ENCODE measurements at regions of chr19 and their contacts with region 1.

Region 1: GRCh38 chr19:56594783-56595547 is at the start of gene ZNF71:
- DNase-seq: peak; percentile 93 to 96 (median 93)
- ATAC-seq: peak; percentile 88 to 99 (median 98)
- H3K4me3 ChIP-seq: peak within 1 kb of the TSS; percentile 65 to 100 (median 88)
- H3K27ac ChIP-seq: peak within 1 kb of the TSS in 11 of 12 donors; percentile 61 to 86 (median 76)
- H3K4me1 ChIP-seq: peaks cover 0 to 24% (median 8%) of the 10 kb centered on the region in 12 donors
- H3K27me3 ChIP-seq: no peaks in the 10 kb centered on the region
- CTCF ChIP-seq: no peak
- POLR2A ChIP-seq: peak in 1 of 2 donors; percentile 64
- total RNA-seq, gene ZNF71: 5.3 to 15.3 (median 7.1) TPM

Region 2: GRCh38 chr19:56567274-56568120 is 27.5 kb before region 1 on chr19 and contains the start of gene ZNF470:
- intact Hi-C with region 1: loop called in 1 of 10 experiments (anchors 2 kb)
- DNase-seq: peak; percentile 95 to 98 (median 96)
- ATAC-seq: peak; percentile 98 to 100 (median 99)
- H3K4me3 ChIP-seq: peak within 1 kb of the TSS; percentile 75 to 98 (median 87)
- H3K27ac ChIP-seq: peak within 1 kb of the TSS; percentile 74 to 97 (median 90)
- H3K4me1 ChIP-seq: peaks cover 0 to 15% (median 6%) of the 10 kb centered on the region in 12 donors
- H3K27me3 ChIP-seq: no peaks in the 10 kb centered on the region
- CTCF ChIP-seq: peak in 1 of 12 donors; percentile 15
- POLR2A ChIP-seq: peak in 1 of 2 donors; percentile 63
- total RNA-seq, gene ZNF470: 1.7 to 7.1 (median 3.2) TPM

Region 3: GRCh38 chr19:56671613-56671994 is 76.6 kb after region 1 on chr19 and contains the start of gene ZNF835:
- intact Hi-C with region 1: loop called in 2 of 10 experiments (anchors 5 kb)
- DNase-seq: peak; percentile 96 to 99 (median 97)
- ATAC-seq: peak; percentile 95 to 99 (median 96)
- H3K4me3 ChIP-seq: peak within 1 kb of the TSS; percentile 57 to 91 (median 82)
- H3K27ac ChIP-seq: peak within 1 kb of the TSS in 10 of 12 donors; percentile 43 to 83 (median 61)
- H3K4me1 ChIP-seq: peaks cover 0 to 20% (median 12%) of the 10 kb centered on the region in 12 donors
- H3K27me3 ChIP-seq: no peaks in the 10 kb centered on the region
- CTCF ChIP-seq: peak in 9 of 12 donors; percentile 19 to 65 (median 44)
- POLR2A ChIP-seq: peak in 1 of 2 donors; percentile 76
- total RNA-seq, gene ZNF835: 1.9 to 16.0 (median 5.0) TPM